MCF 10A (cell line): ENCODE measurements at regions of chr14 and their contacts with region 1.

Region 1: GRCh38 chr14:49767562-49768300 is at the start of gene KLHDC2:
- DNase-seq: peak; percentile 85
- H3K4me3 Mint-ChIP-seq: peak within 1 kb of the TSS; percentile 86
- H3K27ac Mint-ChIP-seq: peak within 1 kb of the TSS; percentile 98
- H3K4me1 Mint-ChIP-seq: peaks cover 18% of the 10 kb centered on the region
- H3K27me3 Mint-ChIP-seq: no peaks in the 10 kb centered on the region
- CTCF ChIP-seq: peak; percentile 14
- total RNA-seq, gene KLHDC2: 28.3 and 32.4 TPM in 2 replicates

Region 2: GRCh38 chr14:49585803-49586672 is 181.7 kb before region 1 on chr14 and contains the start of gene RPS29:
- CTCF ChIA-PET with region 1: interaction called, 5 read pairs
- POLR2A ChIA-PET with region 1: interaction called, 37 read pairs
- intact Hi-C with region 1: no loop called
- DNase-seq: peak; percentile 99
- H3K4me3 Mint-ChIP-seq: peak within 1 kb of the TSS; percentile 81
- H3K27ac Mint-ChIP-seq: peak within 1 kb of the TSS; percentile 98
- H3K4me1 Mint-ChIP-seq: peaks cover 19% of the 10 kb centered on the region
- H3K27me3 Mint-ChIP-seq: no peaks in the 10 kb centered on the region
- CTCF ChIP-seq: no peak
- total RNA-seq, gene RPS29: 1,499 and 1,837 TPM in 2 replicates

Region 3: GRCh38 chr14:49620182-49621113 is 147.3 kb before region 1 on chr14 and contains the starts of genes MGAT2 and RPL36AL:
- CTCF ChIA-PET with region 1: interaction called, 3 read pairs
- POLR2A ChIA-PET with region 1: interaction called, 126 read pairs
- intact Hi-C with region 1: no loop called
- DNase-seq: peak; percentile 98
- H3K4me3 Mint-ChIP-seq: peak within 1 kb of the TSS; percentile 99
- H3K27ac Mint-ChIP-seq: peak within 1 kb of the TSS; percentile 99
- H3K4me1 Mint-ChIP-seq: peaks cover 28% of the 10 kb centered on the region
- H3K27me3 Mint-ChIP-seq: no peaks in the 10 kb centered on the region
- CTCF ChIP-seq: peak; percentile 14
- total RNA-seq, gene MGAT2: 43.8 and 44.3 TPM in 2 replicates
- total RNA-seq, gene RPL36AL: 257 and 299 TPM in 2 replicates

Region 4: DNA sequence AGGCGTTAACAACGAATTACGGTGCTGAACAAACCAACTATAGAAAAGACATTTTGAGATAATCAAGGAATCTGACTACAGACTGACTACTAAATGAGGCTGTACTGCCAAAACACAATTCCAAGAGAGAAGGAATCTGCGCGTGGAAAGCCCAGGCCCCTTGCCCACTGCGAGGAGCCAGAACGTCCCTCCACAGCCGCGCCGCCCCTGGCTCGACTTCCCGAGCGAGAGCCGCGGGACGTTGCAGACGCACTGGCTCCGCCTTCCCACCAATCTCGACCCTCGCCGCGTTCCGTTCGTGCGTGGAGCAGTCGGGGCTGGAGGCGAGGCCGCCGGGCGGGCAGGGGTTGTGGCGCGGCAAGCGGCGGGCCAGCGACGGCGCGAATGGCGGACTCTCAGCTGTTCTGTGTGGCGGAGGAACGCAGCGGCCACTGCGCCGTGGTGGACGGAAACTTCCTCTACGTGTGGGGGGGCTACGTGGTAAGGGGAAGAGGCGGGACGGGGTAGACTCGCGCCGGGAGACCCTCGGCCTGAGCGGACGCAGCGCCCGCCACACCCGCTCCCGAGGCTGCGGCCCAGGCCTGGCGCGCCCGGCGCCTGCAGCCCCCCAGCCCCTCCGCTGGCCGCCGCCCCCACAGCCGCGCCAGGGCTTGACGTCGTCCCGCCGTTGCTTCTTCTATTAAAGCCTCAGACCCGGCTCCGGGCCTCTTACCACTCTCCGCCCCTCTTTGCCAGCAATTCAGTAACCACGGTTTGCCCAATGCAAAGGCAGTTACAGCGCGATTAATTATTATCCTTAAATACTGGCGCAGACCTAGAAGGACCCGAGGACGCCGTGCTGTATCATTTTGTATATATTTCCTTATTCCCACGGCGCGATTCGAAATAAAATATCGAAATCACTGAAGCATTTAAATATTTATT is 74.7 kb before region 1 on chr14 and contains the start of gene KLHDC1:
- CTCF ChIA-PET with region 1: interaction called, 4 read pairs
- POLR2A ChIA-PET with region 1: interaction called, 24 read pairs
- intact Hi-C with region 1: loop called (anchors 5 kb)
- DNase-seq: peak; percentile 51
- H3K4me3 Mint-ChIP-seq: peak within 1 kb of the TSS; percentile 53
- H3K27ac Mint-ChIP-seq: no peak within 1 kb of the TSS
- H3K4me1 Mint-ChIP-seq: peaks cover 5% of the 10 kb centered on the region
- H3K27me3 Mint-ChIP-seq: no peaks in the 10 kb centered on the region
- CTCF ChIP-seq: no peak
- total RNA-seq, gene KLHDC1: 0.35 and 0.52 TPM in 2 replicates

Region 5: GRCh38 chr14:49785773-49786172 is 18.0 kb after region 1 on chr14:
- CTCF ChIA-PET with region 1: interaction called, 6 read pairs
- POLR2A ChIA-PET with region 1: interaction called, 27 read pairs
- intact Hi-C with region 1: no loop called
- DNase-seq: no peak
- H3K4me3 Mint-ChIP-seq: no peak overlapping the region
- H3K27ac Mint-ChIP-seq: no peak overlapping the region
- H3K4me1 Mint-ChIP-seq: no peaks in the 10 kb centered on the region
- H3K27me3 Mint-ChIP-seq: no peaks in the 10 kb centered on the region
- CTCF ChIP-seq: no peak